Common myeloid progenitor, CD34-positive (primary cell): ENCODE measurements at regions of chr16 and their contacts with region 1.

Region 1: GRCh38 chr16:8936421-8936820 is 27.3 kb downstream of the USP7 start:
- DNase-seq: peak; percentile 47 to 78 (median 75)
- H3K4me3 ChIP-seq: no peak overlapping the region
- H3K27ac ChIP-seq: no peak overlapping the region
- H3K4me1 ChIP-seq: peaks cover 0 to 4% (median 0%) of the 10 kb centered on the region in 4 experiments
- H3K27me3 ChIP-seq: no peaks in the 10 kb centered on the region

Region 2: DNA sequence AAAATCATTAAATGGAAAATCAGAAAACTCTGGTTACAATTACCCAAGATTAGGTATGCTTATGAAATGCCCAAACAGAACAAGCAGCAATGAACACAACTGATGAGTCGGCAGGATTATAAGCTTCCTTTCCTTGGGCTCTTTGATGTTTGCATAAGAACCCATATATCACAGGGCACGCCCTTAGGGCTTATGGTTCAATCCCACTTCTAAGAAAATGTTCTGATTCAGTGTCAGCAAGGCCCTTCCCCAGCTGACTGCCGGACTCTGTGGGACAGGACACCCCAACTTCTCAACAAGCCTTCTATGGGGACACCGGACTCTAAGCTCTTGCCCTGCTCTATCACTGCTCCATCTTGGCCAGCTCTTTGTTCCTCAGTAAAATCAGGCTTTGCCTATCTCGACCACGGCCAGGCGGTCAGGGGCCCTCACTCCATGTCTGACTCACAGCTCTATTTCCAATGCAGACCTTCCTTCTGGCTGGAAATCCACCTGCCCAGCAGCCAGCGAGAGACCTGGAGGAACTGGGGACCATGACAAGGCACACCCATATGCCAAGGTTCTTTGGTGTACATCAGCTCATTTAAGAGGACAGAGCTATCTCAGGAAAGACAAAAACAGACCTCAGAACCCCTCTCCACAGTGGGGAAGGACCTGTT is 27.5 kb before region 1 on chr16:
- CTCF ChIA-PET with region 1: interaction called, 15 read pairs
- POLR2A ChIA-PET with region 1: no interaction called
- DNase-seq: no peak
- H3K4me3 ChIP-seq: no peak overlapping the region
- H3K27ac ChIP-seq: no peak overlapping the region
- H3K4me1 ChIP-seq: no peaks in the 10 kb centered on the region
- H3K27me3 ChIP-seq: no peaks in the 10 kb centered on the region

Region 3: DNA sequence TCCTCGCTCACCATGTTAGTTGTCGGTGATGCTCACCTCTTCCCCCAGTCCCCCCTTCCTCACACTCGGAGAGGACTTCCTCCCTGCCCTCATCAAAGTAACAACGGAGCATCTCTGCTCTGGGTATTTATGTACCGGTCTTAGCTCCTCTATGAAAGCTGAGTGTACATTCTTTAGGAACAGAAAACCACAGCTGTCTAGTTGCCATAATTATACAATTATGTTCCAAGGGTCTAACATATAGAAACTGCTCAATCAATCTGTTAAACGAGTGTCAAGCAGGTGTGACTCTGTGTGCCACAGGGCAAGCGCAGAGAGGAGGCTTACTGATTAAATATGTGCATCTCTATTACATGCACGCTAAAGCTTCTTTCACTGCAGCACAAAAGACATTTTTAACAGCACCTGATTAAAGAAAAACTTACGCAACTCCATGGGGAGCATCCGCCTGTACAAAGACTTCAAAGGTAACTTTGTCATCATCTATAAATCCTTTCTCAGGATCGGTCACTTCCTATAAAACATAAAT is 16.4 kb before region 1 on chr16:
- CTCF ChIA-PET with region 1: interaction called, 14 read pairs
- POLR2A ChIA-PET with region 1: interaction called, 6 read pairs
- DNase-seq: no peak
- H3K4me3 ChIP-seq: no peak overlapping the region
- H3K27ac ChIP-seq: no peak overlapping the region
- H3K4me1 ChIP-seq: peaks cover 0 to 34% (median 22%) of the 10 kb centered on the region in 4 experiments
- H3K27me3 ChIP-seq: no peaks in the 10 kb centered on the region

Region 4: GRCh38 chr16:8951447-8952280 is 15.2 kb after region 1 on chr16:
- CTCF ChIA-PET with region 1: interaction called, 18 read pairs
- POLR2A ChIA-PET with region 1: no interaction called
- DNase-seq: no peak
- H3K4me3 ChIP-seq: no peak overlapping the region
- H3K27ac ChIP-seq: no peak overlapping the region
- H3K4me1 ChIP-seq: peaks cover 8 to 34% (median 15%) of the 10 kb centered on the region in 4 experiments
- H3K27me3 ChIP-seq: no peaks in the 10 kb centered on the region

Region 5: GRCh38 chr16:8962393-8963009 is 26.1 kb after region 1 on chr16:
- CTCF ChIA-PET with region 1: interaction called, 13 read pairs
- POLR2A ChIA-PET with region 1: interaction called, 5 read pairs
- DNase-seq: peak; percentile 39 to 79 (median 63)
- H3K4me3 ChIP-seq: peak overlapping the region; percentile 29 to 90 (median 78)
- H3K27ac ChIP-seq: peak overlapping the region; percentile 50 to 58
- H3K4me1 ChIP-seq: peaks cover 25 to 66% (median 61%) of the 10 kb centered on the region in 4 experiments
- H3K27me3 ChIP-seq: no peaks in the 10 kb centered on the region

Region 6: GRCh38 chr16:9008601-9009260 is 72.3 kb after region 1 on chr16:
- CTCF ChIA-PET with region 1: interaction called, 37 read pairs
- POLR2A ChIA-PET with region 1: interaction called, 4 read pairs
- DNase-seq: peak; percentile 76 to 83 (median 83)
- H3K4me3 ChIP-seq: peak overlapping the region in 5 of 7 experiments; percentile 23 to 60 (median 56)
- H3K27ac ChIP-seq: no peak overlapping the region
- H3K4me1 ChIP-seq: peaks cover 0 to 8% (median 6%) of the 10 kb centered on the region in 4 experiments
- H3K27me3 ChIP-seq: peaks cover 0 to 2% (median 0%) of the 10 kb centered on the region in 5 experiments

Region 7: DNA sequence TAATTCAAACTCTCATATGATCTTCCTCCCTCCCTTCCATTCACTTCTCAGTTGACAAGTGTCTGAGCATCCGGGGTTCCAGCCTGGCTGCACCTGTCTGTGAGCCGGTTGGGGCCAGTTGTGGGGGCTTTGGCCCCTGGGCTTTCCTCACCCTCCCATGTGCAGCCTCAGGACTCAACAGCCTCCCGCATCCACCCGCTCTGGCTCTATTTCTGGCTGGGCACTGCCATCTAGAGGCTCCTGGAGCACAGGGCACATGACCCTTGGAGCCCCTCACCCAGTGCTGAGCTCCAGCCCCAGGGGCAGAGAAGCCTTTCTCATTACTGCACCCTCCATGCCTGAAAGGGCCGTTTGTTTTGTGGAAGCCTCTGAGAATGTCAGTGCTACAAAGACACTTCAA is 198.3 kb after region 1 on chr16:
- CTCF ChIA-PET with region 1: interaction called, 13 read pairs
- POLR2A ChIA-PET with region 1: no interaction called
- DNase-seq: peak; percentile 64 to 81 (median 78)
- H3K4me3 ChIP-seq: no peak overlapping the region
- H3K27ac ChIP-seq: no peak overlapping the region
- H3K4me1 ChIP-seq: peaks cover 0 to 20% (median 14%) of the 10 kb centered on the region in 4 experiments
- H3K27me3 ChIP-seq: peaks cover 0 to 2% (median 0%) of the 10 kb centered on the region in 5 experiments